ENCODE measurements at regions of chr1 and their contacts with region 1.

Region 1: DNA sequence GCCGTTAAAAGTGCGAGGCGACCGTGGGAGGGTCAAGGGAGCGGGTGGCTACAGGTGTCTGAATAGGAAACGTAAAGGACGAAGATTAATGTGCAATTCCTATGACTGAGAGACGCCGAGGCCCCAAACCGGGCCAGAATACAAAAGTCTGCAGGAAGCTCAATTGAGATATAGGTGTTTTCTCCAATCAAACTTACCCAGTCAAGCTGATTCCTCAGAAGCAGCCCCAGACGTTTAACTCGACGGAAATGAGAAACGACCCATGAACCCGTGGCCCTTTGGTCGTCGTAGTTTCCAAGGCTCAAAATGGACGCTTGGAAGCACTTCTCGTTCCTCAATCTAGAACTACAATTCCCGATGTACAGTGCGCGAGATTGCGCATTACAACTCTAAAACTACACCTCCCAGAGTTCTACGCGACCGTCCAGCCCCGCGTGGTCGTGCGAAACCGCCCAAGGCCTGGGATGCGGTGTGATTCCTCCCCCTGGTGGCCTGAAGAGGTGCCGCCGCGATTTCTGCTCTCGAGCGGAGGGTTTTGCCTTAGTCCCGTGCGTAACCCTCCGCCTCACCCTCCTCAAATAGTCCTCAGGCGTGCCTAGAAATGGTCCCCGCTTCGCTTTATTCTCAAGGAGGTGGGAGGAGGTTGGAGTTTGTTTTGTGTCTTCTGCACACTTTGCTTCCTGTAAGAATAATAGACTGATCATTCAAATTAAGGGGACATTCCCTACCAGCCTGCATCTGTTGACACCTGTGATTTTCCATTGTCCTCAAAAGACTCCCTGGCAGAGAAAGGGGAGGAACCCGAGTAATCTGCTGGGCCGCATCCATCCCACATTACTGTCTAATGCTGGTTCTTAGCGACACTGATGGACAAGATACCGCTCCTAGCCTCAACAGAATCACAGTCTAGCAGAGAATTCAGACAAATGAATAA is at the start of gene PAFAH2:
- DNase-seq: peak; percentile 98
- H3K4me3 Mint-ChIP-seq: peak within 1 kb of the TSS; percentile 96
- H3K27ac Mint-ChIP-seq: peak within 1 kb of the TSS; percentile 98
- H3K4me1 Mint-ChIP-seq: peaks cover 33% of the 10 kb centered on the region
- H3K27me3 Mint-ChIP-seq: peaks cover 13% of the 10 kb centered on the region

Region 2: DNA sequence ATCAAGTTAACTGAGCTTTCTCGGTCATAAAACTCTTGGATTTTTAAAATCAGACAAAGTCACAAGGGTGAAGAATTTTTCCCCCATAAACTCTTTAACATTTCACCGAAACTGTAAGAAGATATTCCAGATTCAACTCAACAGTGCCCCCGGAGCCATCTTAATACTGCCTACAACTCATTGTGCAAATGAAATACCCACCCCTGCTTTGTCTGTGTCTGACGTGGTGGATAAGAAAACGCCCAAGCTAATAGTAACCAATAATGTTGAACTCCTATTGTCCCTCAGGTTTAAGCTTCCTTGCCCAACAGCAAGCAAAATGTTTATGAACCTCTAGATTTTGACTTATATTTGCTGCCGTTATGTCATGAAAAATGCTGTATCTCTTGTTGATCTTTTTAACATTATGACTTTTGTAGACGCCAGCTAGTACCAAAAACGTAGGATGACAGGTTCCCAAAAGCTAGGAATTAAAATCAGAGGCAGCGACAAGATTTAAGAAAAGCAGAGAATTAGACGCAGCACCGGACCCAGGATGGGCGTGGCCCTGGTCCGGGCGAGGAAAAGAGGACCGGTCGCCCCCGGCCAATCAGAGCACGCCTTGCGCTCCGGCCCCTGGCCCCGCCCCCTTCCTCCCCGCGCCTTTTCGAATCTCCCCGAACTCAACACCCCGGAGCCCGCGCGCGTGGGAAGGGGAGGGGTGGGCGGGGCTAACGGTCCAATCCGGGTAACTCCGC is 93.0 kb before region 1 on chr1:
- CTCF ChIA-PET with region 1: interaction called, 213 read pairs
- DNase-seq: peak; percentile 98
- H3K4me3 Mint-ChIP-seq: peak overlapping the region; percentile 98
- H3K27ac Mint-ChIP-seq: peak overlapping the region; percentile 99
- H3K4me1 Mint-ChIP-seq: peaks cover 49% of the 10 kb centered on the region
- H3K27me3 Mint-ChIP-seq: peaks cover 38% of the 10 kb centered on the region

Region 3: DNA sequence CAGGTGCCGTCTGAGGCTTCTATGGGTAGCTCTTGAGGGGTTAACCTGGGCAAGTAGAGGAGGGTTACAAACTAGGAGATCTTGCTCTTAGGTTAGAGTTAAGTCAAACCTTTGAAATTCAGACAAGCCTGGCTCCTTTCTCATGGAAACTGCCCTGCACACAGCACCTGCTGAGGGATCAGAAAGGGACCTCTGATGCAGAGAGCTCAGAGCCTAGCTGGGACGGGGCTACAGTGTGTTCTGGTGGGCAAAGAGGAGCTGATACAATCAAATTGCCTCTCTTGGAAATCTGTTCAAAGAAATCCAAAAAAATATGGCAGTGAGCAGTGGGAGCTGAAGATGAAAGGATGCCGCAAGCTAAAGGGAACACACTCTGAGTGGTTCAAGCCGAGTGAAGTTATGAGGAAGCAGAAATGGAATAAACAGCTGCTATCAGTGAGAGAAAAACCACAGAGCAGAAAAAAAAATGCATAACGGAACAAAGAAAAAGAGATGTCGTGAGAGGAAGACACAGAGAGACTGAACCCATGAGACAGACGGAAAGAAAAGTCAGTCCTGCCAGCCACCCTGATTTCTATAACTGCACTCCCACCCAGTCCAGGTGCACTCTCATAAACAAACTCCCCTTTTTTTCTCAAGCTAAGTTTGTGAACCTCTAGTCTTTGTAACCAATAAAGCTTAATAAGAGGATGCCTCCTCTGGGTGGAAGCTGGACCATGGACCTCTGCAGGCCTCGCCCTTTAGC is 26.9 kb before region 1 on chr1:
- CTCF ChIA-PET with region 1: interaction called, 21 read pairs
- DNase-seq: peak; percentile 48
- H3K4me3 Mint-ChIP-seq: peak overlapping the region; percentile 6
- H3K27ac Mint-ChIP-seq: peak overlapping the region; percentile 87
- H3K4me1 Mint-ChIP-seq: peaks cover 34% of the 10 kb centered on the region
- H3K27me3 Mint-ChIP-seq: no peaks in the 10 kb centered on the region

Measured in activated naive CD4-positive, alpha-beta T cell treated with anti-CD3 and anti-CD28 coated beads, Interleukin-2, amount 10 ng/mL, durations not matched to agents 7 days and 5 days (primary cell).